AG04449 (cell line): ENCODE measurements at regions of chr6 and their contacts with region 1.

Region 1: DNA sequence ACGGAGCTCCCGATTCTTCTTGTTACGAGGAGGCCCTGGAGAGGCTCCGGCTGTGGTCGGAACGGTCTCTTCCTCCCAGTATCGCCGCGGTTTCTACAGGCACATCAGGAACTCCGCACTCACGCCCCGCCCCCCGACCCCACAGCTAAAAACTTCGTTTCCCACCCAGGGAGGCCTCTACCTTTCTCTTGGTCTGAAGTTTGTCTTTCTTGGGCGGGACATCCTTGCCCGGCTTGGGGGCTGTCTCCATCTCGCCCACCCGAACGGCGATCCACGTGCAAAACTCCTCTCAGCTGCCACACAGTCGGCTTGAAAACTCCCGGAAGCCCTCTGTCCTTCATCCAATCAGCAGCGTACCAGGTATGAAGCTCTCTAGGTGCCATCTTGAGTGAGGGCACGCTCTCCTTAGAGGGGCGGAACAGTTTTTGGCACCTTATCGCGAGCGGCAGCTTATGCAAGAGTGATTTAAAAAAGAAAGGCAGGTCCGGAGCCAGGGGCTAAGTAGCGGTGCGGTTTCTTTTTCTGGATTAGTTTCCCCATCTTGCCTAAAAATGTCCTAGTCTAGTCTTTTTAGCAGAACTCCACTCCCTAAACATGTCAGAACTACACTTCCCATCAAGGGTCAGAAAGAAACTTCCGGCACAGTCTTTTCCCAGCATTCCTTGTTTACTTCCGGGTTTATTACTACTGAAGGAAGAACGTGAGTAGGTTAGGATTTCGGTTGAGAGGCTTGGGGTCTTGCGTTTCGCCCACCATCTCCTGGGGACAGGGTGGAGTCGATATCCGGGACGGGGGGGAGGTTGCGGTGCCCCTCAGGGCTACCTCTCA is at the starts of genes PFDN6 and WDR46:
- DNase-seq: peak; percentile 63
- H3K4me3 ChIP-seq: peak within 1 kb of the TSS; percentile 94
- CTCF ChIP-seq: no peak

Region 2: GRCh38 chr6:33271458-33272274 is 17.5 kb before region 1 on chr6 and contains the starts of genes RPS18 and VPS52:
- CTCF ChIA-PET with region 1: interaction called, 41 read pairs
- POLR2A ChIA-PET with region 1: interaction called, 57 read pairs
- DNase-seq: peak; percentile 96
- H3K4me3 ChIP-seq: peak within 1 kb of the TSS; percentile 93
- CTCF ChIP-seq: no peak

Region 3: GRCh38 chr6:33276864-33277662 is 12.1 kb before region 1 on chr6 and contains the start of gene B3GALT4:
- CTCF ChIA-PET with region 1: interaction called, 41 read pairs
- POLR2A ChIA-PET with region 1: interaction called, 57 read pairs
- DNase-seq: no peak
- H3K4me3 ChIP-seq: peak within 1 kb of the TSS; percentile 49
- CTCF ChIP-seq: peak; percentile 65

Region 4: GRCh38 chr6:33299237-33299944 is 10.3 kb after region 1 on chr6:
- CTCF ChIA-PET with region 1: interaction called, 52 read pairs
- POLR2A ChIA-PET with region 1: interaction called, 7 read pairs
- DNase-seq: no peak
- H3K4me3 ChIP-seq: peak overlapping the region; percentile 85
- CTCF ChIP-seq: peak; percentile 88

Region 5: DNA sequence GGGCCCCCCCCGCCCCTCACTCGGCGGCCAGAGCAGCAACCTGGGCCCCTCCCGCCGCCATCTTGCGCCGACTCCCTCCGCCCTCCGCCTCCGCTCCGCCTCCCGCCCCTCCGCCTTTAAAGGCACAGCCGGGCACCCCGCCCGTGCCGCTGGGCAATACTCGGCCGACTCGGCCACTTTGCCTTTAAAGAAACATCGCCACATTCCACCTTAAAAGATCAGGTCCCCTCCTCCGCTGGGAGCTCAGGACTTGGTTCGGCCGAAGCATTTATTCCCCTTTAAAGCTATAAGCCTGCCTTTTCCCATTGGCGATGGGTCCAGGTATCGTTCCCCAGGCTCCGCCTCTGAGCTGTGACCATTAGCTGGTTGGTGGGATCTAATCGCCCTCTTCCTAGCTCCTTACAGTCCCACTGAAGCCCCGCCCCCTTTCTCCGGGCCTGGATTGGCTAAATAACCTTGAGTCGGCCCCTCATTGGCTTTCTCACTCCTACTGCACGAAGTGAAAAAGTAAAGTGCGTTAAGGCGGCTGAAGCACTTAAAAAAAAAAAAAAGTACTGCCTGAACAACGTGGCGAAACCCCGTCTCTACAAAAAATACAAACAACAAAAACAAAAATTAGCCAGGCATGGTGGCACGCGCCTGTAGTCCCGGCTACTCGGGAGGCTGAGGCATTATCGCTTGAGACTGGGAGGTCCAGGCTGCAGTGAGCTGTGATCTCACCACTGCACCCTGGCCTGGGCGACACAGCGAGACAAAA is 28.7 kb after region 1 on chr6 and contains the start of gene ZBTB22:
- CTCF ChIA-PET with region 1: no interaction called
- POLR2A ChIA-PET with region 1: interaction called, 10 read pairs
- DNase-seq: peak; percentile 95
- H3K4me3 ChIP-seq: peak within 1 kb of the TSS; percentile 67
- CTCF ChIP-seq: no peak